ENCODE measurements at regions of chr14 and their contacts with region 1.

Region 1: GRCh38 chr14:67335781-67336180 is 23.8 kb downstream of the ATP6V1D start:
- DNase-seq: no peak
- ATAC-seq: no peak; the same call in 1 of the 2 replicates
- H3K4me3 Mint-ChIP-seq: no peak overlapping the region
- H3K27ac Mint-ChIP-seq: no peak overlapping the region
- H3K4me1 Mint-ChIP-seq: no peaks in the 10 kb centered on the region
- H3K27me3 Mint-ChIP-seq: no peaks in the 10 kb centered on the region
- CTCF ChIP-seq: 0 out of 2 replicates have a peak, but pooled peaks have one; percentile 27

Region 2: DNA sequence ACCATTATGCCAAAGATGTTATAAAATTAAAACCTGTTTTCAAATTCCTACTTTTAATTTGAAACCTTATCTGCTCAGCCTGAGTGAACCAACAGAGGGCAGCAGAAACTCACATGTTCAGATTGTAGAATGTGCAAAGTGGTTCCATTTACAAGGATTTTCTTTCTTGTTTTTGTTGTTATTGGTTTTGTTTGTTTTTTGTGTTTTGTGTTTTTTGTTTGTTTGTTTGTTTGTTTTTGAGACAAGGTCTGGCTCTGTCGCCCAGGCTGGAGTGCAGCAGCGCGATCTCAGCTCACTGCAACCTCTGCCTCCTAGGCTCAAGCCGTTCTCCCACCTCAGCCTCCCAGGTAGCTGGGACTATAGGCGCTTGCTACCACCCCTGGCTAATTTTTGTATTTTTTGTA is 169.3 kb before region 1 on chr14:
- CTCF ChIA-PET with region 1: interaction called, 15 read pairs
- POLR2A ChIA-PET with region 1: no interaction called
- DNase-seq: peak; percentile 28
- ATAC-seq: peak; percentile 59
- H3K4me3 Mint-ChIP-seq: no peak overlapping the region
- H3K27ac Mint-ChIP-seq: no peak overlapping the region
- H3K4me1 Mint-ChIP-seq: 0 out of 2 replicates have a peak, but pooled peaks cover 7% of the 10 kb centered on the region
- H3K27me3 Mint-ChIP-seq: no peaks in the 10 kb centered on the region
- CTCF ChIP-seq: 0 out of 2 replicates have a peak, but pooled peaks have one; percentile 40

Region 3: GRCh38 chr14:67365476-67365875 is 29.7 kb after region 1 on chr14:
- CTCF ChIA-PET with region 1: no interaction called
- POLR2A ChIA-PET with region 1: no interaction called
- DNase-seq: no peak
- ATAC-seq: no peak
- H3K4me3 Mint-ChIP-seq: no peak overlapping the region
- H3K27ac Mint-ChIP-seq: no peak overlapping the region
- H3K4me1 Mint-ChIP-seq: peaks cover 9% of the 10 kb centered on the region
- H3K27me3 Mint-ChIP-seq: no peaks in the 10 kb centered on the region
- CTCF ChIP-seq: no peak

Region 4: GRCh38 chr14:67411820-67412421 is 76.1 kb after region 1 on chr14 and contains the start of gene PLEK2:
- CTCF ChIA-PET with region 1: no interaction called
- POLR2A ChIA-PET with region 1: no interaction called
- DNase-seq: peak; percentile 42
- ATAC-seq: peak; percentile 74
- H3K4me3 Mint-ChIP-seq: peak within 1 kb of the TSS; percentile 70
- H3K27ac Mint-ChIP-seq: no peak within 1 kb of the TSS
- H3K4me1 Mint-ChIP-seq: peaks cover 10% of the 10 kb centered on the region
- H3K27me3 Mint-ChIP-seq: peaks cover 41% of the 10 kb centered on the region
- CTCF ChIP-seq: no peak
- total RNA-seq, gene PLEK2: 1.2 to 1.4 TPM (median 1.3 TPM) in 3 replicates